PC-9 (cell line): ENCODE measurements at regions of chr17 and their contacts with region 1.

Region 1: GRCh38 chr17:78993241-78993956 is 13.7 kb upstream of the LGALS3BP start:
- DNase-seq: peak in 1 of 2 experiments; percentile 44
- H3K4me3 ChIP-seq: no peak overlapping the region
- H3K27ac ChIP-seq: no peak overlapping the region
- H3K4me1 ChIP-seq: peaks cover 35% of the 10 kb centered on the region
- H3K27me3 ChIP-seq: no peaks in the 10 kb centered on the region
- CTCF ChIP-seq: peak; percentile 78

Region 2: DNA sequence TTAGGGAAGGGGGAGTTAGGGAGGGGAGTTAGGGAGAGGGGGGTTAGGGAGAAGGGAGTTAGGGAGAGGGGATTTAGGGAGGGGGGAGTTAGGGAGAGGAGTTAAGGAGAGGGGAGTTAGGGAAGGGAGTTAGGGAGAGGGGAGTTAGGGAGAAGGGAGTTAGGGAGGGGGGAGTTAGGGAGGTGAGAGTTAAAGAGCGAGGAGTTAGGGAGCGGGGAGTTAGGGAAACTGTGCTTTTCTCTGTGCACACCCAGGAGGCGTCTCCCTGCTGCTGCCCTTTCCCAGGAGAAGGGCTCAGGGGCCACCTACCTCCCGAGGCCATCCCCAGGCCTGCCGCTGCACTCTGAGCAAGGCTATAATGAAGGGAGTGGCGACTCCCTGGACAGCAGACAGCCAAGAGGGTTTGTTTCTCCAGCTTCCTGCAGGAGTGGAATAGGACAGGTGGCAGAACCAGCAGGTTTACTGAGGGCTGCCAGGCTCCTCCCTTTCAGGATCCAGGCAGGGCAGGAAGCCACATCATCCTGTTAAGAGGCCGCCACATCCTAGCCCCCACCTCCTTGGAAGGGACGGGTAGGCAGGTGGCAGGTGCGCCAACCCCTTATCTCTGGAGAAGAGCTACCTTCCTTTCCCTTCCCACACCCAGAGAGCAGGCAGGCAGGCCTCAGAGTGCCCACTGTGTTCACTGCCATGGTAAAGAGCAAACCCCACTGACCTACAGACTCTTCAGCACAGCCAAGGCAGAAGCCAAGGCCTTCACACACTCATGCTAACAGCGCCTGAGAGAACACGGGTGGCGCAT is 11.9 kb after region 1 on chr17:
- CTCF ChIA-PET with region 1: interaction called, 5 read pairs
- POLR2A ChIA-PET with region 1: interaction called, 11 read pairs
- intact Hi-C with region 1: no loop called
- DNase-seq: peak; percentile 85 to 89
- H3K4me3 ChIP-seq: peak overlapping the region; percentile 16; the same call in 1 of the 2 replicates
- H3K27ac ChIP-seq: peak overlapping the region; percentile 76
- H3K4me1 ChIP-seq: peaks cover 40% of the 10 kb centered on the region
- H3K27me3 ChIP-seq: no peaks in the 10 kb centered on the region
- CTCF ChIP-seq: no peak

Region 3: DNA sequence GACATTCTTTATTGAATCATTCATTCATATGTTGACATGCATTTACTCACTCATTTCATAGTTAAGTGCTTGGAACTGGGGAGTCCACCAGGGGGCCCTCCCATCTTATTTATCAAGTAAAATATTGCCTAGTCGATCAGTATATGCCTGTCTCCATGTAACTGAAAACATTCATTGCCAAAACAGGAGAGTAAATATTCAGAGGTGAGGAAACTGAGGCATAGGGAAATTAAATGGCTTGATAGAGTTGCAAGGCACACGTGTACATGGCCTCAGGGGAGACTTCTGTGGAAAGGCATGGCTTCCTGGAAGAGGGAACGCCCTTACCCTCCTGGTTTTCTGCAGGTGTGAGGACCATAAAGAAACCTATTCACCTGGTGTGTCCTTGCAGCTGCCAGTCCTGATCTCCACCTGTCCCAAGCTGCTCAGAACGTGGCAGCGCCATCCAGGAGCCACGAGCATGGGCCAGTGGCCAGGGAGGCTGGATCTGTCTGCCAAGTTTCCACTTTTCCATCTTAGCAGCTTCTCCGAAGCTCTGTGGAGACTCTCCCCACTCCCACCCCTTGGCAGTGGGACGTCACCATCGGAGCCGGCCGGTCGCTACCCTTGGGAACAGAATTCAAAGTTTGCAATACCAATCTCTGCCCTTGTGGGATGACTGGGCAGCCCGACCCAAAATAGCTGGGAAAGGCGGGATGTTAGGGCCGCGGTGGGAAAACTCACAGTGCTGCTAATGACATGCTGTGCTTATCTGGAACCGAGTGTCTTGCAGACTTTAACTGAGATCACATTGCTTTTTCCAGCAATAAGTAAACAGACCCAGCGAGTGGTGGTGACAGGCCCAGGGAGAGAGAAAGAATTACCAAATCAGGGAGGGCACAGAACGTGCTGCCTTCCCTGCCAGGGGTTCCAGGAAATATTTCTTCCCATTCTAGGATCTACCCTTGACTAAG is 26.5 kb after region 1 on chr17:
- CTCF ChIA-PET with region 1: no interaction called
- POLR2A ChIA-PET with region 1: interaction called, 5 read pairs
- intact Hi-C with region 1: loop called (anchors 2 kb)
- DNase-seq: peak; percentile 47 to 49
- H3K4me3 ChIP-seq: no peak overlapping the region
- H3K27ac ChIP-seq: peak overlapping the region; percentile 49; the same call in 1 of the 2 replicates
- H3K4me1 ChIP-seq: peaks cover 50% of the 10 kb centered on the region
- H3K27me3 ChIP-seq: no peaks in the 10 kb centered on the region
- CTCF ChIP-seq: peak; percentile 78

Region 4: DNA sequence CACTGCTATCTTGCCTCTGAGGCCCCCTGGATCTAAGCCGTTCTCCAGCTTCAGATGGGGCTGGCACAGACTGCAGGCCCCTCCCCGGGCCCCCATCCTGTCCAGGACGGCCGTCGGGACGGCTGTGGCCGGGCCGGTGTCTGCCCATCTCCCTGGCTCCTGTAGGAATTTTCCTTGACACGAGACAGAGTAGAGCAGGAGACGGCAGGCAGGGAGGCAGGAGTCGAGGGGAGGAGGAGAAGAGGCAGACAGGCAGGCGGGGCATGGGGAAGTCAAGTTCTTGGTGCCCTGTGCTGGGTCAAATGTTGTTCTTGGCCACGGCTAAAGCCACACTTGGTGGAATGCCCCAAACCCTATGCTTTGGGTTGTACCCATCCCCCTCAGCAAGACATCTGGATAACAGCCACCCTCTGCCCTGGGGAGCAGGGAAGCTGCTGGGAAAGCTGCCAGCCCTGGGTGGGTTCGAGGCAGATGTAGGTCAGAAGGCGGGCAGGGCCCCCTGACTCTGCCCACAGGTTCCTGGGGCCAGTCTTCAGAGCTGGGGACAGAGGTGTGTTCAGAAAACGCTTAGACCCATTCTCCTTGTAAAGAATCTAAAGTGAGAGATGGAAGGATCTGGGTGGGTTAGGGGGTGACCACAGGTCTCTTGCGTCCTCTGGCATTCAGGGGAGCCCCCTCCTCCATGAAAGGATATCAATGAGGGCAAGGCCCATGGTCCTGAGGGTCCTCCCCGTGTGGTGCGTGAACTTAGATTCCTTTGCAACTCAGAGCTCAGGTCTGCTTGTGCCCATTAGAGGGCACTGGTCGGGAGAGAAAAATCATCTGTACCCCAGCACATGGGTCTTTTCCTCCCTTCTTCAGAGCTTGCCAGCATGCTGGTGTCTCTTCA is 34.8 kb after region 1 on chr17:
- CTCF ChIA-PET with region 1: interaction called, 10 read pairs
- POLR2A ChIA-PET with region 1: interaction called, 3 read pairs
- intact Hi-C with region 1: no loop called
- DNase-seq: peak in 1 of 2 experiments; percentile 35
- H3K4me3 ChIP-seq: no peak overlapping the region
- H3K27ac ChIP-seq: no peak overlapping the region
- H3K4me1 ChIP-seq: peaks cover 37% of the 10 kb centered on the region
- H3K27me3 ChIP-seq: no peaks in the 10 kb centered on the region
- CTCF ChIP-seq: no peak